ENCODE measurements at regions of chr14 and their contacts with region 1.

Region 1: GRCh38 chr14:34302654-34303053 is 159.4 kb downstream of the SPTSSA start:
- DNase-seq: no peak
- ATAC-seq: no peak
- H3K4me3 Mint-ChIP-seq: no peak overlapping the region
- H3K27ac Mint-ChIP-seq: no peak overlapping the region
- H3K4me1 Mint-ChIP-seq: no peaks in the 10 kb centered on the region
- H3K27me3 Mint-ChIP-seq: peaks cover 7% of the 10 kb centered on the region
- CTCF ChIP-seq: no peak

Region 2: DNA sequence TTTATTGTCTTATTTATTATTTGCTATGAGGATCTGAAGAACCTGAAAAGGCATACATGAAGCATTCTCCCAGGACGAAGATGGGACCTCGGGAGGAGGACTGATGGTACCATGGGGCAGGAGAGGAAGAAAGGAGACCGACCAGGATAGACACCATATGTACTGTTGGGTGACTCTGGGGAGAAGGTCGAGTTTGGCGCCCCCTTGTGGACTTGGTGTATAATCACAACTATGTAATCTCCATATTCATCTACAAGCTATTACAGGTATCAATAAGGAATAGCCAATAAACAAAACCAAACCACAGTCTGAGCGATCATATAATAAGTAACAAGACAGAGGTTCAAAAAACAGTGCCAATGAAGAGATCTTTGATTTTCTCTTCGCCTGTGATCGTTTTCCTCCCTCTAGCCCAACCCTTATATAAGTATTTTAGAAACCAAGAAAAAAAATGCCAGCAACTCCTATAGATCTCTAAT is 20.3 kb after region 1 on chr14:
- CTCF ChIA-PET with region 1: interaction called, 12 read pairs
- POLR2A ChIA-PET with region 1: no interaction called
- intact Hi-C with region 1: no loop called
- DNase-seq: peak; percentile 68
- ATAC-seq: peak; percentile 90
- H3K4me3 Mint-ChIP-seq: no peak overlapping the region
- H3K27ac Mint-ChIP-seq: no peak overlapping the region
- H3K4me1 Mint-ChIP-seq: no peaks in the 10 kb centered on the region
- H3K27me3 Mint-ChIP-seq: peaks cover 1% of the 10 kb centered on the region
- CTCF ChIP-seq: peak; percentile 78

Region 3: DNA sequence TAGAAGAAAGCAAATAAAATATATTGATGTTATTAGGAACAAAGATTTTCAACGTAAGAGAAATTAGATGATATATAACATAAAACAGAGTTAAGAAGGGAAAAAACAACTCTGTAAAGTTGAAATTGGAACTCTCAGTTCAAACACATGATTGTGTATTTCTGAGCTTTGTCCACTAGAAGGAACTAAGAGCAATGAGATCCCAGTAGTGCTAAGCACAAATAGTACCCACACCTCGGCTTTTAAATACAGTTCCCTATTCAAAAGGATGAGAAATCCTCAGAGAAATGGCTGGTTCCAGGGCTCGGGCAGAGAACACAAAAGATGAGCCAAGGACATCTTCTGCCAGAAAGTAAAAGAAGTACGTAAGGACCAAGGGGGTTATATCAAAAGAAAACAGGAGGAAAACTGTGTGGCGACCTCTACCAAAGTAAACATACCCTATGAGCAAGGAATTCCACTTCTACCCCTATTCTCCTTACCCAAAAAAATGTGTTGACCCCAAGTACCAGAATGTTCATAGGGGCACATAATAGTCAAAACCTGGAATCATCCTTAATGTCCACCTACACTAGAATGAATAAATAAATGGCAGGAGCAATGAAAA is 62.8 kb after region 1 on chr14:
- CTCF ChIA-PET with region 1: no interaction called
- POLR2A ChIA-PET with region 1: no interaction called
- intact Hi-C with region 1: no loop called
- DNase-seq: no peak
- ATAC-seq: no peak
- H3K4me3 Mint-ChIP-seq: no peak overlapping the region
- H3K27ac Mint-ChIP-seq: no peak overlapping the region
- H3K4me1 Mint-ChIP-seq: no peaks in the 10 kb centered on the region
- H3K27me3 Mint-ChIP-seq: peaks cover 11% of the 10 kb centered on the region
- CTCF ChIP-seq: no peak

Region 4: GRCh38 chr14:34484726-34485125 is 182.1 kb after region 1 on chr14:
- CTCF ChIA-PET with region 1: no interaction called
- POLR2A ChIA-PET with region 1: no interaction called
- intact Hi-C with region 1: no loop called
- DNase-seq: no peak
- ATAC-seq: no peak
- H3K4me3 Mint-ChIP-seq: no peak overlapping the region
- H3K27ac Mint-ChIP-seq: no peak overlapping the region
- H3K4me1 Mint-ChIP-seq: no peaks in the 10 kb centered on the region
- H3K27me3 Mint-ChIP-seq: no peaks in the 10 kb centered on the region
- CTCF ChIP-seq: no peak